HepG2 (cell line): ENCODE measurements at regions of chr17 and their contacts with region 1.

Region 1: DNA sequence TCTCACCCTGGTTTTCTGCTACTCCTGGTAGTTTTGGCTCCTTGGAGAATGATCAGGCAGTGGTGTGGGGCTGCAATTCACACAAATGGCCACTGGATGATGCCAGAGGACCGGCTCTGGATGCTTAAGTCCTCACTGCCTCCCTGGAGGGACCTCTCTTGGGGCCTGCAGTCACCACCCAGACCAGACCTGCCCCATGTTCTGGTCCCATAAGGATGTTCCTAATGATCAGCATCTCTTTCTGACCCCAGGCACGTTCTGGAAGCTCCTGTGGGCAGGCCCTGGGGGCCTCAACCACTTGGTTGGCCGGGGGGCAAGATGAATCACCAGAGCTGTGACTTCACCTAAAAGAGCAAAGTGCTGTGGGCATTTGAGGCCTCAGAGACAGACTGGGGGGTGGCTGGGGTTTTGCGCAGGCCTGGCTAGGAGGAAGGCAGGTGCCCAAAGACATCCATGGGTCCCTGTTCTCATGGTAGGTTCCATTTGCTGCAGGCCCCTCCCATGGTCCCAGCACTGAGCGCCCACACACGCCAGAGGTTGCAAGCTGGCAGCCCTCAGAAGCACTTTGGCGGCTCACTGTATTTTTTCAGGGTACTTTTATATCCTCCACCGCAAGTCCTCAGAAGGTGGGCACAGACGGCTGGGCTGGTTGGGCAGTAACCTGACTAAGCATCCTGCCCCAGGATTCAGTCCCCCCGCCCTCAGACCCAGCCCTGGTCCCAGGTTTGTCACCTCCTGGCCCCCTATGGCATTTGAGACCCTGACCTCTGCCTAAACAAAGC is 53.2 kb downstream of the NT5M start:
- DNase-seq: peak; percentile 73
- ATAC-seq: peak; percentile 74
- H3K4me3 ChIP-seq: no peak overlapping the region; a peak in 1 of 6 replicates
- H3K27ac ChIP-seq: no peak overlapping the region
- H3K4me1 ChIP-seq: peaks cover 36% of the 10 kb centered on the region
- H3K27me3 ChIP-seq: peaks cover 0 to 13% of the 10 kb centered on the region in 2 experiments; a peak in 1 of 5 replicates
- CTCF ChIP-seq: peak; percentile 96
- EP300 ChIP-seq: no peak; a peak in 1 of 4 replicates
- POLR2A ChIP-seq: no peak
- RAD21 ChIP-seq: peak; percentile 99

Region 2: DNA sequence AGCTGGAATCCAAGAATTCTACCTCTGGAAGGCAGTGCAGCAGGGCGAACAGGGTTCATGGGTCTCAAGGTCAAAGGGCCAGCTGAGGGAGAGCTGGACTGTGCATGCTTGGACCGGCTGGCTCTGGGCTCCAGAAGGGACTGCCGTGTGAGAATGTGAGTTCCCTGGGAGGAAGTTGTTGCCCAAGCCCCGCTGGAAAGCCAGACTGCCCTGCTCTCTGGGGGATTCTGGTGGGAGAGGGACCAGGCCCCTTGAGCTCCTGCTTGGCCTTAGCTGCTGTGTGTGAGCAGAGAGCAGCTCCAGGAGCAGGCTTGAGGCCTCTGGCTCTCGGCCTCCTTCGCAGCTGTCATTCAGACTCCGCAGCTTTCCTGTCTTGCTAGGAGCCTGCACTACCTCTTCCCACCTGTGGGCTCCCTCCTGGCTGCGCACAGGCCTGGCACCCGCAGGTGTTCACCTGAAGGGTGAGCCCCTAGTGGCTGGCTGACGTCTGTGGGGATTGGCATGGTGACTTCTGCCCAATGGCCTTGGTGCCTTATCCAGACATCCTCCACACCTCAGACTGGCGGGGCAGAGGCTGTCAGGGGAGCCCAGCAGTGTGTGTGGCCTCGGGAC is 31.6 kb after region 1 on chr17:
- CTCF ChIA-PET with region 1: interaction called, 16 read pairs
- POLR2A ChIA-PET with region 1: no interaction called
- in situ Hi-C with region 1: no loop called
- intact Hi-C with region 1: no loop called
- DNase-seq: peak; percentile 77
- ATAC-seq: peak; percentile 95
- H3K4me3 ChIP-seq: peak overlapping the region in 2 of 3 experiments; percentile 25 to 62; a peak in 3 of 6 replicates
- H3K27ac ChIP-seq: no peak overlapping the region
- H3K4me1 ChIP-seq: peaks cover 19% of the 10 kb centered on the region
- H3K27me3 ChIP-seq: peaks cover 0 to 14% of the 10 kb centered on the region in 2 experiments; a peak in 2 of 5 replicates
- CTCF ChIP-seq: peak; percentile 75
- EP300 ChIP-seq: no peak
- POLR2A ChIP-seq: no peak
- RAD21 ChIP-seq: peak; percentile 84

Region 3: GRCh38 chr17:17425591-17425990 is 69.3 kb after region 1 on chr17:
- CTCF ChIA-PET with region 1: interaction called, 9 read pairs
- POLR2A ChIA-PET with region 1: interaction called, 3 read pairs
- in situ Hi-C with region 1: no loop called
- intact Hi-C with region 1: loop called (anchors 1 kb)
- DNase-seq: no peak
- ATAC-seq: no peak
- H3K4me3 ChIP-seq: no peak overlapping the region
- H3K27ac ChIP-seq: no peak overlapping the region
- H3K4me1 ChIP-seq: peaks cover 22% of the 10 kb centered on the region
- H3K27me3 ChIP-seq: no peaks in the 10 kb centered on the region; a peak in 1 of 5 replicates
- CTCF ChIP-seq: no peak
- EP300 ChIP-seq: no peak
- POLR2A ChIP-seq: no peak
- RAD21 ChIP-seq: no peak

Region 4: GRCh38 chr17:17445925-17446665 is 89.8 kb after region 1 on chr17:
- CTCF ChIA-PET with region 1: no interaction called
- POLR2A ChIA-PET with region 1: no interaction called
- in situ Hi-C with region 1: loop called (anchors 5 kb)
- intact Hi-C with region 1: no loop called
- DNase-seq: peak; percentile 98
- ATAC-seq: peak; percentile 89
- H3K4me3 ChIP-seq: peak overlapping the region; percentile 46 to 64 (median 57); a peak in 4 of 6 replicates
- H3K27ac ChIP-seq: peak overlapping the region; percentile 65
- H3K4me1 ChIP-seq: peaks cover 79% of the 10 kb centered on the region
- H3K27me3 ChIP-seq: 0 out of 5 replicates have a peak, but pooled peaks cover 0 to 13% of the 10 kb centered on the region in 2 experiments
- CTCF ChIP-seq: peak; percentile 31
- EP300 ChIP-seq: peak; percentile 75 to 98; a peak in 3 of 4 replicates
- POLR2A ChIP-seq: peak in 1 of 2 experiments; percentile 2; a peak in 1 of 4 replicates
- RAD21 ChIP-seq: no peak

Region 5: GRCh38 chr17:17466511-17466910 is 110.2 kb after region 1 on chr17:
- CTCF ChIA-PET with region 1: no interaction called
- POLR2A ChIA-PET with region 1: no interaction called
- in situ Hi-C with region 1: no loop called
- intact Hi-C with region 1: no loop called
- DNase-seq: no peak
- ATAC-seq: no peak
- H3K4me3 ChIP-seq: no peak overlapping the region
- H3K27ac ChIP-seq: no peak overlapping the region
- H3K4me1 ChIP-seq: peaks cover 70% of the 10 kb centered on the region
- H3K27me3 ChIP-seq: peaks cover 7 to 36% of the 10 kb centered on the region in 2 experiments; a peak in 4 of 5 replicates
- CTCF ChIP-seq: no peak
- EP300 ChIP-seq: no peak
- POLR2A ChIP-seq: no peak
- RAD21 ChIP-seq: no peak

Region 6: DNA sequence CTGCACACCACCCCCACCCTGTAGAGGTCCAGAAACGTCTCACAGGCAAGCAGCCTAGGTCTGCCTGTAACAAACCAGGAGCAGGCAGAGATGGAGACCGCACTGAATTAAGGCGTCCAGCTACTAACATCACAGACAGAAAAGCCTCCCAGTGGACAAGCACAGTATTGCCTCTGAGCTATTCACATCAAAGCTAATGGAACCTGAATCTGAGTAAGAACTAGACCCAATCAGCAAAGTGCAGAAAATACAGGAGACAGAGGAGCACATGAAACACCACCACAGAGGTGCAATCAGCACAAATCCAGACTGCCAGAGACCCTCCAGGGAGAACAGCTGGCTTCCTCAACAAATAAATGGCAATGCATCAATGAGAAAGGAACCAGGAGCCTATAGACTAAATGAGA is 257.4 kb after region 1 on chr17:
- CTCF ChIA-PET with region 1: interaction called, 19 read pairs
- POLR2A ChIA-PET with region 1: no interaction called
- in situ Hi-C with region 1: no loop called
- intact Hi-C with region 1: no loop called
- DNase-seq: peak; percentile 63
- ATAC-seq: peak; percentile 93
- H3K4me3 ChIP-seq: no peak overlapping the region
- H3K27ac ChIP-seq: no peak overlapping the region
- H3K4me1 ChIP-seq: peaks cover 18% of the 10 kb centered on the region
- H3K27me3 ChIP-seq: no peaks in the 10 kb centered on the region
- CTCF ChIP-seq: peak; percentile 79
- EP300 ChIP-seq: no peak
- POLR2A ChIP-seq: no peak
- RAD21 ChIP-seq: peak; percentile 51